HEK293 (cell line): ENCODE measurements at regions of chr9 and their contacts with region 1.

Region 1: DNA sequence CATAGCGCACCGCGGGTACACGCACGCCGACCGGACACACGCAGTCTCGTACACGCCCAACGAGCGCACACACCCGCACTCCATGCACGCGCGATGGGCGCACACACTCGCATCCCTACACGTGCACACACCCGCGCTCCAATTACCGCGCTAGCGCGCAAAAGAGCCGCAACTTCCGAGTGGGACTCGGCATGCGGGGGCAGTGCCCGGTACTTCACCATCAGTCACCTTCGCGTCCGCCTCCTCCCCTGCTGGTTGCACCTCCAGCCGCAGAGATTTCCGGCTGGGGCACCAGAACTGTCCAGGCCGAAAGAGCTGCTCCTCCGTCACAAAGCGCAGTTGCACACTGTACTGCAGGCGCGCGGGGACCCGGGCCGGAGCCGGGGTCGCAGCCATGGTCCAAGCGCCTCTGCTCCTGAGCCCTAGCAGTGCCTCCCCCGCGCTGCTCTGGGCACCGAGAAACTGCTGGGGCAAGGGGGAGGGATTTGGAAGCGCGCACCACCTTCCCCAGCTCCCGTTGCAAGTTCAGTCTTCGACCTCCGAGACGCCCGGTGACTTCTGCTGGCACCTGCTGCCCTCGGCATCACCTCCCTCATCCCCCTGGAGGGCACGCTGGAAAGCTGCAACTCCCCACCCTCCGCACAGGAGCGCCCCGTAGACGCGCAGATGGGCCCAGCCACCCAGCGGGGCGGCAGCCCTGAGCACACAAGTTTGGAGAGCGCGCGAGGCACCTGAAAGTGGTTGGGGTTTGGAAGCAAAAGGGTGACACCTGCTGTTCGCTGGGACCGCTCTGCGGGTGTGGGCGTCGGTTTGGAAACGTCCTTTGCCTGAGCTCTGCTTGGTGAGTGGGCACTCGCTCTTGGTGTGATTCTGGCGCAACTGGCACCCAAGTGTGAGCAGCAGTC is 337.4 kb upstream of the PUM3 start:
- H3K4me3 ChIP-seq: peak overlapping the region; percentile 44
- H3K27ac ChIP-seq: no peak overlapping the region; the same call in 1 of the 2 replicates
- H3K4me1 ChIP-seq: no peaks in the 10 kb centered on the region
- CTCF ChIP-seq: peak; percentile 92

Region 2: GRCh38 chr9:2857564-2858198 is 323.6 kb before region 1 on chr9:
- CTCF ChIA-PET with region 1: interaction called, 64 read pairs
- POLR2A ChIA-PET with region 1: no interaction called
- H3K4me3 ChIP-seq: no peak overlapping the region
- H3K27ac ChIP-seq: no peak overlapping the region
- H3K4me1 ChIP-seq: no peaks in the 10 kb centered on the region
- CTCF ChIP-seq: peak; percentile 42; the same call in 1 of the 2 replicates

Region 3: GRCh38 chr9:2872257-2872935 is 308.9 kb before region 1 on chr9:
- CTCF ChIA-PET with region 1: interaction called, 82 read pairs
- POLR2A ChIA-PET with region 1: no interaction called
- H3K4me3 ChIP-seq: no peak overlapping the region
- H3K27ac ChIP-seq: no peak overlapping the region
- H3K4me1 ChIP-seq: no peaks in the 10 kb centered on the region
- CTCF ChIP-seq: 0 out of 2 replicates have a peak, but pooled peaks have one; percentile 15

Region 4: GRCh38 chr9:3008091-3008490 is 173.2 kb before region 1 on chr9:
- CTCF ChIA-PET with region 1: interaction called, 19 read pairs
- POLR2A ChIA-PET with region 1: no interaction called
- H3K4me3 ChIP-seq: no peak overlapping the region
- H3K27ac ChIP-seq: no peak overlapping the region
- H3K4me1 ChIP-seq: no peaks in the 10 kb centered on the region
- CTCF ChIP-seq: no peak

Region 5: DNA sequence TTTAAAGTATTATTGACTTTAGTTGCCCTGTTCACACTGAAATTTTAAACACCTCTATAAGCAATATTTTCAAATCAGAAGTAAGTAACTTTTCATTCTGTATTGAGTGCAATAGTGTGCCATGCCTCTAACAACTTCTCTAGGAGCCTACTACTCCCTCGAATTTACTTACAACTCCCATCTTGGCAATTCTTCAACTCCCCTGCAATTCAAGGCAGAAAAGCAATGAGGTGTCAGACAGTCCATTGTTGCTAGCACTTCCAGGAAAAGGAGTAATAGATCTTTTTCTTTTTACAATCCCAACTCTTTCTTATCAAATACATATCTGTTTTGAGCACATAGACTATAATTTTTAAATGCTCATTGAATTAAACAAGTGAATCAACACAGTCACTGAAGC is 114.7 kb before region 1 on chr9:
- CTCF ChIA-PET with region 1: no interaction called
- POLR2A ChIA-PET with region 1: no interaction called
- H3K4me3 ChIP-seq: no peak overlapping the region
- H3K27ac ChIP-seq: no peak overlapping the region
- H3K4me1 ChIP-seq: no peaks in the 10 kb centered on the region
- CTCF ChIP-seq: no peak

Region 6: GRCh38 chr9:3191715-3192114 is 10.4 kb after region 1 on chr9:
- CTCF ChIA-PET with region 1: interaction called, 27 read pairs
- POLR2A ChIA-PET with region 1: no interaction called
- H3K4me3 ChIP-seq: no peak overlapping the region
- H3K27ac ChIP-seq: no peak overlapping the region
- H3K4me1 ChIP-seq: no peaks in the 10 kb centered on the region
- CTCF ChIP-seq: no peak

Region 7: DNA sequence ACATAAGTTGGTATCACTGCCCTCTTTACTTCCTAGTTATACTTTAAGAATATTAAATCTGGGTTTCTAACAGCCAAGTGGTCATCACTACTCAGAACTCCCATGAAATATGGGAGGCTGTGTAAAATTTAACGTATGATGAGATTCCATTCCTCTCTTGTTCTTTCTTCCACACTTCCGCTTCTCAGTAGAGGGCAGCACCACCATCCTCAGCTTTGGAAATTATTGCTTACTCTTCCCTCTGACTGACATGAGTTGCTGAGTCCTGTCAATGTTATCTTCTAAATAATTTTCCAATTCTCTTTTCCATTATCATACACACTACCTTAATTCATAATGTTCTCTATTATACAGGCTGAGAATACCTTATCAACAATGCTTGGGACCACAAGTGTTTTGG is 150.5 kb after region 1 on chr9:
- CTCF ChIA-PET with region 1: no interaction called
- POLR2A ChIA-PET with region 1: no interaction called
- H3K4me3 ChIP-seq: no peak overlapping the region
- H3K27ac ChIP-seq: no peak overlapping the region
- H3K4me1 ChIP-seq: no peaks in the 10 kb centered on the region
- CTCF ChIP-seq: no peak

Region 8: DNA sequence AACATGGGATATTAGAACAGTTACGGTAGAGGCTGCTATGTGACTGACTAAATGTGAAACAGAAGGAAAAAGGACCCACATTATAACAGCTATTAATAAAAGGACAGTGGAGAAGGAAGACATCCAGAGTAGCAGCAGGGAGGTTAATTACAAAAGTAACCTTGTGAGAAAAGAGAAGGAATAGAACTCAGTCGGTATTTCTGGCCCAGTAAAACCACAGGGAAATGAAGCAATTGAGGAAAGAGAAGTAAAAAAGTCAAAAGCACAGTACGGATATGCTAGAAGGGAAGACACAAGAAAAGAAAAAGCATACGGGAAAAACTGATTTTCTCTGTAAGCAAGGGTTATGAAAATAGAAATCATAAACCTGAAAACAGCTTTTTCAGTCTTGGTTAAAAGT is 179.8 kb after region 1 on chr9:
- CTCF ChIA-PET with region 1: no interaction called
- POLR2A ChIA-PET with region 1: no interaction called
- H3K4me3 ChIP-seq: no peak overlapping the region
- H3K27ac ChIP-seq: no peak overlapping the region
- H3K4me1 ChIP-seq: no peaks in the 10 kb centered on the region
- CTCF ChIP-seq: no peak